ENCODE measurements at regions of chr14 and their contacts with region 1.

Region 1: GRCh38 chr14:60248697-60249318 is at the start of gene PPM1A:
- DNase-seq: peak; percentile 89
- ATAC-seq: peak; percentile 68
- H3K4me3 Mint-ChIP-seq: peak within 1 kb of the TSS; percentile 99
- H3K27ac Mint-ChIP-seq: peak within 1 kb of the TSS; percentile 100
- H3K4me1 Mint-ChIP-seq: peaks cover 52% of the 10 kb centered on the region
- H3K27me3 Mint-ChIP-seq: peaks cover 2% of the 10 kb centered on the region
- CTCF ChIP-seq: no peak
- total RNA-seq, gene PPM1A: 40.1 and 47.5 TPM in 2 replicates

Region 2: DNA sequence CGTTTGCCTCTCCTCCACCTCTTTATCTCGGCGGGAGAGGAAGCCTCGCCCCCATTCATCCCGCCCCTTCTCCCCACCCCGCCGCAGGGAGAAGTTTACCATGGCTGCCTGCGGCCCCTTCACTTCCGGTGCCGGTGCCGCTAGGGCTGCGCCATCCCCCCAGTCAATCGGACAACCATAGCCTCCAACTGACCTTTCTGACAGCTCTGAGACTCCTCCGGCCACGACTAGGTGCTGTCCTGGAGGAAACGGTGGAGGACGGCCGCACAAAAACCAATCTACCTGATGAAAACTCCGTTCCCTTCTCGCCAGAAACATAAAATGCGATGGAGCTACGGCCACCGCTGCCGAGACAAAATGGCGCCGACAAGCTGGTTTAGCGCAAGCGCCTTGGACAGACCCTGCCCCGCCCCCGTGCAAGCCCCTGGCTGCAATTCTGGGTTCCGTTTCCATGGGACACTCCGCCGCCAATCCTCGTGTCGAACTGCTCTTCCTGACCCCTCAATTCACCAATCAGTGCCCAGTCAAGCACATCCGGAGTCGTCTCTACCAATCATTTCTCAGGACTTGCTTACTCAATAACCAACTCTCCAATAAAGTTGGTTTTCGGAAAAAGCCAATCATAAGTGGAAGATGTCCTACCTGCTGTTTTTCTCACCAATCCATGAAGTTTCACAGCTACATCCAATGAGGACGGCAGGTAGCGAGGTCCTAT is 1950.9 kb before region 1 on chr14:
- CTCF ChIA-PET with region 1: no interaction called
- POLR2A ChIA-PET with region 1: interaction called, 10 read pairs
- intact Hi-C with region 1: loop called (anchors 2 kb)
- DNase-seq: peak; percentile 91
- ATAC-seq: peak; percentile 83
- H3K4me3 Mint-ChIP-seq: no peak overlapping the region
- H3K27ac Mint-ChIP-seq: no peak overlapping the region
- H3K4me1 Mint-ChIP-seq: peaks cover 50% of the 10 kb centered on the region
- H3K27me3 Mint-ChIP-seq: no peaks in the 10 kb centered on the region
- CTCF ChIP-seq: no peak

Region 3: DNA sequence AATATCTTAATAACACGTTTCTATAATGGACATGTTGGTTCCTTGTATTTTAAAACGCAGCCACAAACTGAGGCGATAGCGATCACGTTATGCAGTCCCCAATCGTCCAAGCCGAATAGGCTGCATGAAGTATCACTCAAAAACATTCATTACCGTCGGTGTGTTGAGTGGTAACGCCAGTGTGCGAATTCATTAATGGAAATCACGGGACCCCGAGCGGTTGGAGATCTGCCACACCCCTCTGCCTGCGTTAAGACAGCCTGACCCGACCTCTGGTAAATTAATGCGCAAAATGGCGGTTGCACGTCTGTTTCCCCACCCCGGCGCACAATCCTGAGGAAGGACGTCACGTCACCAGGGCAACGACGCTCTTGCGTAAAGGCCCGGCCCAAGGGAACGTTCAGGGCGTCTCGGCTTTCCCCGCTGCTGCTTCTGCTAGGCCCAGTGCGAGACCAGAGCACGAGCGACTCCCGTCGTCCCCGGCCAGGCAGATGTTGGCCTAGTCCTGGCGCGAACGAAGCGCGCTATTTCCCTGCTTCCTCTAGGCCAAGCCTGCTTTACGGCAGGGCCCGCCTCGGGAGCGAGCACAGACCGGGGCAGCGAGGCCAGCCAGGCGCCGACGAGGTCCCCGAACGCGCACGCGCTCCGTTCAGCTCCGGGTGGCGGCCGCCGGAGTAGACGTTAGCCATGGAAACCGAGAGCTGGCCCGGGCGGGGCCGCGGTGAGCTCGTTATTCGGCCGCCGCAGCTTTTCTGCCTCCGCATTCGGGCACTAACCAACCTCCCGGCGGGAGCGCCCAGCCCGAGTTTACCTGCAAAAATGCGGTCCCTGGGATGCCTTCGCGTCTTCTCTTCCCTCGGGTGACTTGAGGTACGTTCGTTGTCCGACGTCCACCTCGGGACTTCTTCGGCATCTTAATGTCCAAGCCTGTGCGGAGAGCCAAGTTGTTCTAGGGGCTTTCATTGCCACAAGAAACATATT is 157.0 kb before region 1 on chr14 and contains the start of gene PCNX4:
- CTCF ChIA-PET with region 1: no interaction called
- POLR2A ChIA-PET with region 1: interaction called, 48 read pairs
- intact Hi-C with region 1: loop called (anchors 1 kb)
- DNase-seq: peak; percentile 88
- ATAC-seq: peak; percentile 91
- H3K4me3 Mint-ChIP-seq: peak within 1 kb of the TSS; percentile 92
- H3K27ac Mint-ChIP-seq: peak within 1 kb of the TSS; percentile 96
- H3K4me1 Mint-ChIP-seq: peaks cover 37% of the 10 kb centered on the region
- H3K27me3 Mint-ChIP-seq: no peaks in the 10 kb centered on the region
- CTCF ChIP-seq: no peak
- total RNA-seq, gene PCNX4: 31.7 and 41.4 TPM in 2 replicates

Region 4: GRCh38 chr14:60212503-60213371 is 36.1 kb before region 1 on chr14:
- CTCF ChIA-PET with region 1: no interaction called
- POLR2A ChIA-PET with region 1: interaction called, 29 read pairs
- intact Hi-C with region 1: loop called (anchors 2 kb)
- DNase-seq: no peak
- ATAC-seq: peak; percentile 93
- H3K4me3 Mint-ChIP-seq: peak overlapping the region; percentile 24
- H3K27ac Mint-ChIP-seq: peak overlapping the region; percentile 68
- H3K4me1 Mint-ChIP-seq: peaks cover 13% of the 10 kb centered on the region
- H3K27me3 Mint-ChIP-seq: no peaks in the 10 kb centered on the region
- CTCF ChIP-seq: no peak

Region 5: DNA sequence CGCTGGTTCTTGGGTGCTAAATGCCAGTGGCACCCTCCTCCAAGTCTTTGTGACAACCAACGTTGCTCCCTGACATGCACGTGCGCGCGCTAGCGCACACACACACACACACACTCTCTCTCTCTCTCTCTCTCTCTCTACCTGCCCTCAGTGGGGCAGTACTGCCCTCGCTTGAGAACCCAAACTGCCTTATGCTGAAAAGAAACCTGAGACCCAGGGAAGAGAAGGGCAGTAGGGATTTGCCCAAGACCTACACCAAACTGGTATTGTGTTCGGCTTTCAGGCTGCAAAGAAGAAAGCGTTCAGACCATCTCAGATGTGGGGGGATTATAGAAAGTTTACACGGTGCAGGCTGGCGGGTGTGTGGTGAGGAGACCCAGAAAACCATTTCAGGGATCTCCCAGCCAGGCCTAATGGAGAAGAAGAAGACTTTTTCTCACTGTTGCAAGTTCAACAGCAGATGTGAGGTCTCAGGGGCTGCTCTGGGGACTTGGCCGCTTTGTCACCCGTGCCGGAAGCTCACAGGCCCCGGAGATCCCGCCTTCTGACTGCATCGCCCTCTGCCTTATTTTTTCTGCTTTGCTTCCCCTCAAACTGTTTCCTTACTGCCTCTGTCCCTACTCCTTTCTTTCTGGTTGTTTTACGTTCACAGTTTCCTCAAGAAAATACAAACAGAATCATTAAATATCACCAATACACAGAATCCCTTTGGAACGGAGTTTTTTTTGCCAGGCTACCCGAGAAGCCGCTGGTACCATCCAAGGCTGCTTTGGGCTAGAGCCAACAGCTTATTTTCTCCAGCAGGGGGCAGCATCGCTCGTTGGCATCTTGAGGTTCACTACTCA is 82.6 kb after region 1 on chr14:
- CTCF ChIA-PET with region 1: interaction called, 7 read pairs
- POLR2A ChIA-PET with region 1: interaction called, 56 read pairs
- intact Hi-C with region 1: loop called (anchors 1 kb)
- DNase-seq: peak; percentile 53
- ATAC-seq: peak; percentile 68
- H3K4me3 Mint-ChIP-seq: peak overlapping the region; percentile 96
- H3K27ac Mint-ChIP-seq: peak overlapping the region; percentile 92
- H3K4me1 Mint-ChIP-seq: peaks cover 26% of the 10 kb centered on the region
- H3K27me3 Mint-ChIP-seq: peaks cover 19% of the 10 kb centered on the region
- CTCF ChIP-seq: peak; percentile 70

Region 6: DNA sequence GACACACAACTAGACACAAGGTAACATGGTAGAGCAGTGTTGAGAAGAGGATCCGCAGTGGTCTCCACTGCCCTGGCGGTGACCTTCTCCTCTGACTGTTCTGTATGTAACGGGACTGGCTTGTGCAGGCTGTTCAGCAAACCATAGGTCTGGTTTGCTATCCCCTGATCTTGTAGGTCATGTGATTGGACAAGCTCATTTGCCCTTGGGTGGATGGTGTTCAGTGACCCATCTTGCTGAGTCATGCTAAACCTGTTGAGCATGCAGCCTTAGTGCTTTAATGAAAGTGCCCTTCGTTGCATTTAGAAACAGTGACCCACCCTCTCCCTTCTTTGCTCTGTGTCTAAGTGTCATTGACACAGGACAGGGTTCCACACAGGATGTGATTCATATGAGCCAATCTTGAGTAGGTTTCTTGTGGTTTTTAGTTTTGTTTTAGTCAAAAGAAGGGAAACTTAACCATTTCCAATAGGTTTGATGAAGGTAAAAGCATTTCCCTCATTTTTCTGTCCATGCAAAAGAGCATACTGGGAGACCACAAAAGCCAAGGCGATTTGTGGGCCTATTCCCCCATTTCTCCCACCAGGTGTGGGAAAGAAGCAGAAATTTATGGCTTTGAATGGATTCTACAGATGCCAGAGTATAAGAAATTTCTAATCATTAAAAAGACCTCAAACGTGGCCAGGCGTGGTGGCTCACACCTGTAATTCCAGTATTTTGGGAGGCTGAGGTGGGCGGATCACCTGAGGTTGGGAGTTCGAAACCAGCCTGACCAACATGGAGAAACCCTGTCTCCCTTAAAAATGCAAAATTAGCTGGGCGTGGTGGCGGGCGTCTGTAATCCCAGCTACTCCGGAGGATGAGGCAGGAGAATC is 1413.9 kb after region 1 on chr14:
- CTCF ChIA-PET with region 1: no interaction called
- POLR2A ChIA-PET with region 1: interaction called, 3 read pairs
- intact Hi-C with region 1: loop called (anchors 2 kb)
- DNase-seq: peak; percentile 26
- ATAC-seq: peak; percentile 78
- H3K4me3 Mint-ChIP-seq: peak overlapping the region; percentile 78
- H3K27ac Mint-ChIP-seq: peak overlapping the region; percentile 91
- H3K4me1 Mint-ChIP-seq: peaks cover 57% of the 10 kb centered on the region
- H3K27me3 Mint-ChIP-seq: no peaks in the 10 kb centered on the region
- CTCF ChIP-seq: no peak

Measured in activated B cell treated with CpG ODN at 0.5 μM for 24 hours (primary cell).